Activated B cell treated with CpG ODN at 0.5 μM for 24 hours (primary cell): ENCODE measurements at regions of chr5 and their contacts with region 1.

Region 1: GRCh38 chr5:123610665-123611405 is 98.9 kb downstream of the CSNK1G3 start:
- DNase-seq: no peak
- ATAC-seq: peak; percentile 73
- H3K4me3 Mint-ChIP-seq: no peak overlapping the region
- H3K27ac Mint-ChIP-seq: peak overlapping the region; percentile 72
- H3K4me1 Mint-ChIP-seq: peaks cover 7% of the 10 kb centered on the region
- H3K27me3 Mint-ChIP-seq: no peaks in the 10 kb centered on the region
- CTCF ChIP-seq: peak; percentile 100

Region 2: GRCh38 chr5:122500245-122501075 is 1110.4 kb before region 1 on chr5:
- CTCF ChIA-PET with region 1: no interaction called
- POLR2A ChIA-PET with region 1: no interaction called
- intact Hi-C with region 1: loop called (anchors 1 kb)
- DNase-seq: no peak
- ATAC-seq: no peak
- H3K4me3 Mint-ChIP-seq: no peak overlapping the region
- H3K27ac Mint-ChIP-seq: no peak overlapping the region
- H3K4me1 Mint-ChIP-seq: no peaks in the 10 kb centered on the region
- H3K27me3 Mint-ChIP-seq: peaks cover 7% of the 10 kb centered on the region
- CTCF ChIP-seq: no peak

Region 3: DNA sequence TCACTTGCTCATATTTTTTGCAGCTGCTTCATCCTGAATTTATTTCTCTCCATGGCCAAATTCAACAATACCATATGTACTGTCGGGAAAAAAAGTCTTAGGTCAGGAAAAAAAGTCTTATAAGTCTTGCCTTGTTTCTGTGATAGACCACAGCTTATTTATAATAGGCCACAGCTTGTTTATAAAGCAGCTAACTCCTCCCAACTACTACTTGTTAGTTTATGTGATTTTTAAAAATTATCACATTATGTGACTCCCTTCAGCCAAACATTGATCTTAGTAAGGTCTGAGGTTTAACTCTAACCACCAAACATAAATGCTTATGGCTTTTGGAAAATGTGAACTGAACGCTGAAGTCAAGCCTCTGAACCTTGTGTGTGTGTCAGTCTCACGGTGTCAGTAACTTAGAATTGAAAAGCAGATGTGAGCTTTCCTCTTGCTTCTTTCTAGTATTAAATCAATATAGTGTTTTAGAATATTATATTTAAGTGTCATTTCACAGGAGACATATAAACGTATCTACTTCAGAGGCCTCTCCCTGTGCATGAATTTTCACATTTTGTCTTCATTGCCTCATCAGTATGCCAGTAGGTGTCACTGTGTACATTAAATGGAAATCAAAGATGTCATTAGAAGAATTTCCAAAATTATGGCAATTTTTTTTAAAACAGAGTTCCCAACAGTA is 714.1 kb before region 1 on chr5:
- CTCF ChIA-PET with region 1: interaction called, 6 read pairs
- POLR2A ChIA-PET with region 1: no interaction called
- intact Hi-C with region 1: loop called (anchors 1 kb)
- DNase-seq: no peak
- ATAC-seq: no peak
- H3K4me3 Mint-ChIP-seq: no peak overlapping the region
- H3K27ac Mint-ChIP-seq: no peak overlapping the region
- H3K4me1 Mint-ChIP-seq: no peaks in the 10 kb centered on the region
- H3K27me3 Mint-ChIP-seq: no peaks in the 10 kb centered on the region
- CTCF ChIP-seq: no peak

Region 4: GRCh38 chr5:123371575-123372179 is 239.2 kb before region 1 on chr5:
- CTCF ChIA-PET with region 1: interaction called, 8 read pairs
- POLR2A ChIA-PET with region 1: no interaction called
- intact Hi-C with region 1: loop called (anchors 5 kb)
- DNase-seq: peak; percentile 21
- ATAC-seq: no peak
- H3K4me3 Mint-ChIP-seq: no peak overlapping the region
- H3K27ac Mint-ChIP-seq: no peak overlapping the region
- H3K4me1 Mint-ChIP-seq: no peaks in the 10 kb centered on the region
- H3K27me3 Mint-ChIP-seq: no peaks in the 10 kb centered on the region
- CTCF ChIP-seq: peak; percentile 31

Region 5: GRCh38 chr5:123511648-123512605 is 98.9 kb before region 1 on chr5 and contains the start of gene CSNK1G3:
- CTCF ChIA-PET with region 1: interaction called, 5 read pairs
- POLR2A ChIA-PET with region 1: interaction called, 7 read pairs
- intact Hi-C with region 1: loop called (anchors 1 kb)
- DNase-seq: peak; percentile 81
- ATAC-seq: peak; percentile 91
- H3K4me3 Mint-ChIP-seq: peak within 1 kb of the TSS; percentile 99
- H3K27ac Mint-ChIP-seq: peak within 1 kb of the TSS; percentile 99
- H3K4me1 Mint-ChIP-seq: peaks cover 47% of the 10 kb centered on the region
- H3K27me3 Mint-ChIP-seq: no peaks in the 10 kb centered on the region
- CTCF ChIP-seq: no peak
- total RNA-seq, gene CSNK1G3: 79.9 and 82.7 TPM in 2 replicates

Region 6: GRCh38 chr5:123571927-123572326 is 38.9 kb before region 1 on chr5:
- CTCF ChIA-PET with region 1: no interaction called
- POLR2A ChIA-PET with region 1: no interaction called
- intact Hi-C with region 1: no loop called
- DNase-seq: no peak
- ATAC-seq: no peak
- H3K4me3 Mint-ChIP-seq: no peak overlapping the region
- H3K27ac Mint-ChIP-seq: peak overlapping the region; percentile 56
- H3K4me1 Mint-ChIP-seq: peaks cover 25% of the 10 kb centered on the region
- H3K27me3 Mint-ChIP-seq: no peaks in the 10 kb centered on the region
- CTCF ChIP-seq: no peak